ENCODE measurements at regions of chr9 and their contacts with region 1.

Region 1: GRCh38 chr9:19161257-19162025 is 34.1 kb upstream of the PLIN2 start:
- DNase-seq: peak; percentile 41 to 97
- H3K4me3 ChIP-seq: no peak overlapping the region
- H3K27ac ChIP-seq: peak overlapping the region; percentile 98
- H3K4me1 ChIP-seq: peaks cover 18% of the 10 kb centered on the region
- H3K27me3 ChIP-seq: no peaks in the 10 kb centered on the region
- CTCF ChIP-seq: no peak

Region 2: GRCh38 chr9:19102631-19103345 is 58.7 kb before region 1 on chr9 and contains the start of gene HAUS6:
- CTCF ChIA-PET with region 1: no interaction called
- POLR2A ChIA-PET with region 1: no interaction called
- intact Hi-C with region 1: loop called (anchors 2 kb)
- DNase-seq: peak; percentile 81 to 86
- H3K4me3 ChIP-seq: peak within 1 kb of the TSS; percentile 64
- H3K27ac ChIP-seq: peak within 1 kb of the TSS; percentile 77
- H3K4me1 ChIP-seq: peaks cover 10% of the 10 kb centered on the region
- H3K27me3 ChIP-seq: no peaks in the 10 kb centered on the region
- CTCF ChIP-seq: peak; percentile 45; the same call in 1 of the 2 replicates
- total RNA-seq, gene HAUS6: 13.3 and 19.1 TPM in 2 replicates

Region 3: GRCh38 chr9:19127881-19128500 is 33.5 kb before region 1 on chr9:
- CTCF ChIA-PET with region 1: no interaction called
- POLR2A ChIA-PET with region 1: no interaction called
- intact Hi-C with region 1: no loop called
- DNase-seq: no peak
- H3K4me3 ChIP-seq: no peak overlapping the region
- H3K27ac ChIP-seq: no peak overlapping the region
- H3K4me1 ChIP-seq: peaks cover 17% of the 10 kb centered on the region
- H3K27me3 ChIP-seq: no peaks in the 10 kb centered on the region
- CTCF ChIP-seq: no peak

Region 4: GRCh38 chr9:19241506-19242127 is 80.2 kb after region 1 on chr9:
- CTCF ChIA-PET with region 1: no interaction called
- POLR2A ChIA-PET with region 1: interaction called, 13 read pairs
- intact Hi-C with region 1: no loop called
- DNase-seq: no peak
- H3K4me3 ChIP-seq: no peak overlapping the region
- H3K27ac ChIP-seq: no peak overlapping the region
- H3K4me1 ChIP-seq: no peaks in the 10 kb centered on the region
- H3K27me3 ChIP-seq: no peaks in the 10 kb centered on the region
- CTCF ChIP-seq: no peak